ENCODE measurements at regions of chr14 and their contacts with region 1.

Region 1: DNA sequence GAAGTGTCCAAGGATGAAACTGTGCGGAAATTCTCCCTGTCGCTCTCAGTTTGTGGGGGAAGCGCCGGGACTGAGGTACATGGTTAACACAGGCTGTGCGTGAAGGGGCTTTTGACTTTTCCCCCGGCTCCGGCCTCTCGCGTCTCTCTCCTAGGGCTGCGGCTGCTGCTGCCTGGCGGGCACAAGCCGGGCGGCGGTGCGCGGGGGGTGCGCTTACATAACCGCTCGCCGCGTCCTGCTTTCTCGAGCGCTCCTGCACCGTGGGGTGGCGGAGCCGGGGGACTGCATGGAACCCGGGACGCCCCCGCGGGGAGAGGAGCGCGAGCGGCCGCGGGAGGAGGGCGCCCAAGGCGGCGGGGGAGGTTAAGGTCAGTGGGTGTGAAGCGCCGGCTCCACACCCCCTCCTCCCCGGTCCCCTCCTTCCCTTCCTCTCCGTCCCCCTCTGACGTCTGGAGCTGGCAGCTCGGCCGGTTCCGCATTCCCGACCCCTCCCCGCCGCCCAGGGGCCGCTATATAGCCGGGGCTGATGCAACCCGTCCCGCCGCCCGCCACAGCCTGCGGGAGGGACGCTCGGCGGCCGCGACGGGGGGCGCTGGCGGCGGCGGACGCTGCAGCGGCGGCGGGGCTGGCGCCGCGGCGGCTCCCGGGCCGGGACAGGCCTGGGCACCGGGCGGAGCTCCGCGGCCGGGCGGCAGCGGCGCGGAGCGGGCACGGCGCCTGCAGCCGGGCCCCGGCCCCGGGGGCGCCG is at the start of gene JDP2:
- DNase-seq: peak; percentile 82
- H3K4me3 Mint-ChIP-seq: peak within 1 kb of the TSS; percentile 76
- H3K27ac Mint-ChIP-seq: peak within 1 kb of the TSS; percentile 72
- H3K4me1 Mint-ChIP-seq: peaks cover 16% of the 10 kb centered on the region
- H3K27me3 Mint-ChIP-seq: peaks cover 24% of the 10 kb centered on the region
- total RNA-seq, gene JDP2: 1.1 and 1.4 TPM in 2 replicates

Region 2: GRCh38 chr14:75560962-75561432 is 133.3 kb after region 1 on chr14:
- intact Hi-C with region 1: loop called (anchors 5 kb)
- DNase-seq: peak; percentile 84
- H3K4me3 Mint-ChIP-seq: peak overlapping the region; percentile 63
- H3K27ac Mint-ChIP-seq: peak overlapping the region; percentile 98
- H3K4me1 Mint-ChIP-seq: peaks cover 61% of the 10 kb centered on the region
- H3K27me3 Mint-ChIP-seq: no peaks in the 10 kb centered on the region

Measured in activated CD4-positive, alpha-beta T cell treated with anti-CD3 and anti-CD28 coated beads, Interleukin-2, amount 10 ng/mL, durations not matched to agents 24 days and 14 days (primary cell).